Activated CD8-positive, alpha-beta memory T cell treated with anti-CD3 and anti-CD28 coated beads, Interleukin-2, amount 10 ng/mL, durations not matched to agents 7 days and 5 days (primary cell): ENCODE measurements at regions of chr4 and their contacts with region 1.

Region 1: DNA sequence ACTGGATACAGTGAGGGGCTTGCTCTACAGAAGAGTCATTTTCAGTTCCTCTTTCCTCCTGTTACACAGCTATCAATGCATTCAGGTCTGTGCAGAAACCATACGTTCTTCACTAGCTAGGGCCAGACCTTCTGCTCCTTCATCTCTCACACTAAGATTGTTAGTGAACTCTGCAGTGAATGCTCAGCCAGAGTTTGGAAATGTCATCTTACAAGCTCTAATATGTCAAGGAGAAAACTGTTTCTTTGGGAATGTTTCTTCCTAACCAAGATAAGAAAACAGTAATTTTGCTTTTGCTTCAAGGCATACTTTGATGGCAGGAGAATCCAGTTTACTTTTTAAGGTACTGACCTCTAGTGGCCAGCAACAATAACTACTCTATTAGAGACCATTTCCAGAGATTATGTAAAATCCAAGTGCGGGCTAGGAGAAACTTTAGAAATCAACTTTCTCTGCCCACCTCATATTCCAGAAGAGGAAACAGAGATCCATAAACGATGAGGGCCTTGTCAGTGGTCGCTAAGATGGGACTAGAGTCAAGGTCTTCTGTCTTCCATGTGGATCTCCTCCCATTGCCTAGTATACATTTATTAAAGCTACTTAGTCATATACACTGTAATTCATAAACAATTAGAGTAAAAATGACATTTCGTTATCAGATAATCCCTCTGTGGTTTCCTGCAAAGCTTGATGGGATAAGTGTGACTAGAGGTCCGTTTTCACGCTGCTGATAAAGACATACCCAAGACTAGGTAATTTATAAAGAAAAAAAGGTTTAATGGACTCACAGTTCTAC is 12.1 kb upstream of the CC2D2A start:
- DNase-seq: no peak
- ATAC-seq: no peak
- H3K4me3 Mint-ChIP-seq: no peak overlapping the region
- H3K27ac Mint-ChIP-seq: no peak overlapping the region
- H3K4me1 Mint-ChIP-seq: no peaks in the 10 kb centered on the region
- H3K27me3 Mint-ChIP-seq: peaks cover 6% of the 10 kb centered on the region

Region 2: GRCh38 chr4:15162465-15163283 is 294.9 kb before region 1 on chr4:
- CTCF ChIA-PET with region 1: no interaction called
- DNase-seq: no peak
- ATAC-seq: no peak
- H3K4me3 Mint-ChIP-seq: no peak overlapping the region
- H3K27ac Mint-ChIP-seq: no peak overlapping the region
- H3K4me1 Mint-ChIP-seq: no peaks in the 10 kb centered on the region
- H3K27me3 Mint-ChIP-seq: peaks cover 25% of the 10 kb centered on the region

Region 3: GRCh38 chr4:15231265-15232091 is 226.1 kb before region 1 on chr4:
- CTCF ChIA-PET with region 1: interaction called, 23 read pairs
- DNase-seq: peak; percentile 80
- ATAC-seq: peak; percentile 81
- H3K4me3 Mint-ChIP-seq: no peak overlapping the region
- H3K27ac Mint-ChIP-seq: no peak overlapping the region
- H3K4me1 Mint-ChIP-seq: peaks cover 23% of the 10 kb centered on the region
- H3K27me3 Mint-ChIP-seq: no peaks in the 10 kb centered on the region

Region 4: DNA sequence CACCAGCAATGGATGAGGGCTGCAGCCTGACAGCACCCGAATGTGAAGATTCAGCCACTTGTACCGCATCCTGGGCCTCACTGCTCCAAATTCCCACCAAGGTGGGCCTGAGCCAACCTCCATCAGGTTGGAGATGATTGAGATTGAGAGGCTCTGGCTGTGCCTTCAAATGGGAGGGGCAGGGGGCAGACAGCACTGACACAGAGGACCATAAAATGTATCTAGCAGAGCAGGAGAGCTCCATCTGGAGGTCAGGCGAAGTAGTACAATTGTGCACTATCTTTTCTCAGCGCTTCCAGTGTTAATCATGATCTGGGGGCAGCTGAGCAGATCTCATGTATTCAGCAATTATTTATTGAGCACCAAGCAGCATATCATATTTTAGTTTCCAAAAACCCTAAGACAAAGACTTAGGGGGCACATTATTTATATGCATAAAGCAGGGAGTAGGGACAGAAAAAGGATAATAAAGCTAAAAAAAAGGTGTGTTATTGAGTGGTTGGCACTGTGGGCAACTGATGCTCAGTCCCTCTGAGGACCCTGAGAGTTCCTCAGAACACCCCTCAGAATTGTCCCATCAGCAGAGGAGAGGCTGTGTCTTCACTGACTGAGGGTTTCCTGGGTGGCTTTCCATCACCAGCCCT is 61.3 kb before region 1 on chr4:
- CTCF ChIA-PET with region 1: interaction called, 10 read pairs
- DNase-seq: peak; percentile 73
- ATAC-seq: peak; percentile 70
- H3K4me3 Mint-ChIP-seq: no peak overlapping the region
- H3K27ac Mint-ChIP-seq: no peak overlapping the region
- H3K4me1 Mint-ChIP-seq: peaks cover 13% of the 10 kb centered on the region
- H3K27me3 Mint-ChIP-seq: no peaks in the 10 kb centered on the region

Region 5: GRCh38 chr4:15444872-15445547 is 12.6 kb before region 1 on chr4:
- CTCF ChIA-PET with region 1: interaction called, 12 read pairs
- DNase-seq: no peak
- ATAC-seq: no peak
- H3K4me3 Mint-ChIP-seq: no peak overlapping the region
- H3K27ac Mint-ChIP-seq: no peak overlapping the region
- H3K4me1 Mint-ChIP-seq: peaks cover 3% of the 10 kb centered on the region
- H3K27me3 Mint-ChIP-seq: peaks cover 4% of the 10 kb centered on the region

Region 6: DNA sequence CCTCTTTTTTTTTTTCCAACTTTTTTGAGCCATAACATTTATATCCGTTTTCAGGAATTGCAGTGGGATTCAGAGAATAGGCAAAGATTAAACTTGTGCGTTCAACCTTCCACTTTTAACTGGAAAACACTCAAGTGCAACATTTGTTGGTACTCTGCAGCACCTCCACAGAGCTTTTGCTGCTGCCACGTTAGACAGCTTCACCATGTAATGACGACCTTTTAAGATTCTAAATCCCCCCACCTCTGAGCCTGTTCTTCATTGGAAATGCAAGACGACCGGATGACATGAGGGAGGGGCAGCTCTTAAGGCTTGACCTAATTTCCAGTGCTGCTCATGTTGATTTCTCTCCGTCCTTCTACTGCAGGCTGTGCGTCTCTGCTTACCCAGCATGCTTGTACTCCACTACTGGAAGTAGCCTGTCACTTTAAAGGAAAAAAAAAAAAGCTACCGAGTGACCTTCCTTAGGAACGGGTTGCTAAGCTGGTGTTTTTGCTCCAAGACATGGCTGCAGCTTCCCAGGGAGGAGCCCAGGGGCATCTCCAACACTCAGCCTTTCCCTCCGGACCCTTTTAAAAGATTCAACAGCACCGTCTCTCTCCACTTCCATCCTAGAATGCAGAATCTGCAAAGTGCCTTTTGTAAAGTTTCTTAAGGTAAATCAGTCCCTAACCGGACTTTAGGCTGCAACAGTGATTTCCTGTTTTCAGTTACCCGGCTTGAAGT is 12.0 kb after region 1 on chr4 and contains the start of gene CC2D2A:
- CTCF ChIA-PET with region 1: interaction called, 15 read pairs
- DNase-seq: no peak
- ATAC-seq: no peak
- H3K4me3 Mint-ChIP-seq: no peak within 1 kb of the TSS
- H3K27ac Mint-ChIP-seq: no peak within 1 kb of the TSS
- H3K4me1 Mint-ChIP-seq: peaks cover 12% of the 10 kb centered on the region
- H3K27me3 Mint-ChIP-seq: peaks cover 6% of the 10 kb centered on the region
- total RNA-seq, gene CC2D2A: not detected

Region 7: GRCh38 chr4:15598644-15599043 is 141.0 kb after region 1 on chr4:
- CTCF ChIA-PET with region 1: no interaction called
- DNase-seq: no peak
- ATAC-seq: no peak
- H3K4me3 Mint-ChIP-seq: no peak overlapping the region
- H3K27ac Mint-ChIP-seq: no peak overlapping the region
- H3K4me1 Mint-ChIP-seq: no peaks in the 10 kb centered on the region
- H3K27me3 Mint-ChIP-seq: no peaks in the 10 kb centered on the region